ENCODE measurements at regions of chr3 and their contacts with region 1.

Region 1: DNA sequence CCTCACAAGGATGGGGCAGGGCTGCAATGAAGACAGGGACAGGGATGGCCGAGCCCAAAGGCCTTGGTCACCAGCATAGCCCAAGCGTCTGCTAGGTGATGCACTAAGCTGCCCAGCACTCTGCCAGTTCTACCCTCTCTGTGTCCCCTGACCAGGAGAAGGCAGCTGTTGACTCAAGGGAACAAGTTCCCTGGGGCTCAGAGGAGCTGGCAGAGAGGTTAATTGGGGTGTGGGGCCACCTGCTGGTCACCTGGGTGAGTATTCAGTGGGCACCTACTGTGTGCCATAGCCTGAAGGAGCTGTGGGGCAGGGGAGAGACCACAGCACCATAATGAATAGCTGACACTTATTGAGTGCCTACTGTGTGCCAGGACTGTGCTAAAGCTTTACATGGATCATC is 22.0 kb upstream of the DOCK3 start:
- DNase-seq: peak; percentile 80
- ATAC-seq: peak; percentile 51
- H3K4me3 Mint-ChIP-seq: no peak overlapping the region
- H3K27ac Mint-ChIP-seq: peak overlapping the region; percentile 7
- H3K4me1 Mint-ChIP-seq: peaks cover 25% of the 10 kb centered on the region
- H3K27me3 Mint-ChIP-seq: no peaks in the 10 kb centered on the region

Region 2: GRCh38 chr3:50617096-50617791 is 35.5 kb before region 1 on chr3 and contains the start of gene MAPKAPK3:
- CTCF ChIA-PET with region 1: interaction called, 78 read pairs
- POLR2A ChIA-PET with region 1: interaction called, 9 read pairs
- intact Hi-C with region 1: loop called (anchors 1 kb)
- DNase-seq: peak; percentile 60
- ATAC-seq: peak; percentile 0
- H3K4me3 Mint-ChIP-seq: peak within 1 kb of the TSS; percentile 96
- H3K27ac Mint-ChIP-seq: peak within 1 kb of the TSS; percentile 96
- H3K4me1 Mint-ChIP-seq: peaks cover 66% of the 10 kb centered on the region
- H3K27me3 Mint-ChIP-seq: no peaks in the 10 kb centered on the region
- total RNA-seq, gene MAPKAPK3: 178 to 218 TPM

Region 3: DNA sequence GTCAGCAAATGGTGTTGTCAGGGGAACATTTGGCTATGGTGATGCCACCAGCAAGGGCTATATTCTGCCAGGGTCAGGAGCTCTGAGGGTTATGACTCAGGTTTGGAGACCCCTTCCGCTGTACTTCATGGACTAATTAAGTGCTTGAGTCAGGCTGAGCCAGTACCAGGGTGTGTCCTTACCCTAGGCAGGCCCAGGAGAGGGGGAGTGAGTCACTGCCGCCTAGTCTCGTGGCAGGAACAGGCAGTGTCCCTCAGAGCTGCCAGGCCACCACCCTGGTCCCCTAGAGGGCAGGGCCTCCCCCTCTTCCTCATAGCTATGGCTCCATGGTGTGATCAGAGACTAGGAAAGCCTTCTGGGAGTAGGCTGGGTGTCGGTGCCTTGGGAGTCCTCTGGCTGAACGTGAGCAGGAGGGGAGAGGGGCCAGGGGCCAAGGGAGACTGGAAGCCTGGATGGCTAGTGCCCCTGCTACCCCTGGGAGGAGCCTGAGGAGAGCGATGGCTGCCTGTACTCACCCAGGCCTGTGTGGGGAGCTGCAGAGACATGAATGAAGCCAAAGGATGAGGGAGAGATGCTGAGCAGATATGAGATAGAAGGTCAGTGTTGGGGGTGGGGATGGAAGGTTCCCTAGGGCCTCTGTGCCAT is 25.2 kb before region 1 on chr3:
- CTCF ChIA-PET with region 1: interaction called, 14 read pairs
- POLR2A ChIA-PET with region 1: interaction called, 5 read pairs
- intact Hi-C with region 1: no loop called
- DNase-seq: peak; percentile 59
- ATAC-seq: peak; percentile 42
- H3K4me3 Mint-ChIP-seq: no peak overlapping the region
- H3K27ac Mint-ChIP-seq: peak overlapping the region; percentile 77
- H3K4me1 Mint-ChIP-seq: peaks cover 97% of the 10 kb centered on the region
- H3K27me3 Mint-ChIP-seq: no peaks in the 10 kb centered on the region